Heart left ventricle (tissue), 16 donors: ENCODE measurements at regions of chr12 and their contacts with region 1.

Region 1: DNA sequence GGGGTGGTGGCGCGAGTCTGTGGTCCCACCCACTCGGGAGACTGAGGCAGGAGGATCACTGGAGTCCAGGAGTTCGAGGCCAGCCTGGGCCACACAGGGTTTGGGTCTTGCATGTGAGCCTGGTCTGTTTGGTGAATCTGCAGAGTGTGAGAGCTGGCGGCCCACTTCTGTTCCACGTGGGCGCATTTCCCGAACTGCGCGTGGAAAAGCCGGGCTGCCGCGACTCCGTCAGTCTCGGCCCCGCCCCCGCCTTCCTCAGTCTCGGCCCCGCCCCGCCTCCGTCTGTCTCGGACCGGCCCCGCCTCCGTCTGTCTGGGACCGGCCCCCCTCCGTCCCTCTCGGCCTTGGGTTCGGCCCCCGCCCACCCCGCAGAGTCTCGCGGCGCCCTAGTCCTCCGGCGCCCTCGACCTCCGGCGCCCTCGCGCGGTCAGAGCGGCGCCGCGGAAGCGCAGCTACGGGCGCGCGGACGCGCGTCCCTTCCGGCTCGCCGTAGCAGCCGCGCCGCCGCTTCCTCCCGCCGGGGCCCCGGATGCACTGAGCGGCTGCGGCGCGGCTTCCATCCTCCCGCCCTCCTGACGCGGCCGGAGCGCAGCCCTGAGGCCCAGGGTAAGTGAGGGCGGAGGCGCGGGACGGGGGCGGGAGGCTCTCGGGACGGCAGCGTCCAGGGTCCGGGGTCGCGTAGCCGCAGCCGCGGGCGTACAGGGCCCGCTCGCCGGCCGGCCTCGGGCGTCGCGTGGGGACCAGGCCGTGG is at the start of gene EP400:
- DNase-seq: peak; percentile 96 to 98 (median 97)
- ATAC-seq: peak; percentile 98 to 99 (median 98)
- H3K4me3 ChIP-seq: peak within 1 kb of the TSS; percentile 62 to 99 (median 92)
- H3K27ac ChIP-seq: peak within 1 kb of the TSS; percentile 46 to 87 (median 81)
- H3K4me1 ChIP-seq: peaks cover 0 to 47% (median 15%) of the 10 kb centered on the region in 12 donors
- H3K27me3 ChIP-seq: no peaks in the 10 kb centered on the region
- CTCF ChIP-seq: peak; percentile 14 to 84 (median 61)
- POLR2A ChIP-seq: peak in 1 of 2 donors; percentile 57
- total RNA-seq, gene EP400: 10.3 to 27.8 (median 18.3) TPM

Region 2: DNA sequence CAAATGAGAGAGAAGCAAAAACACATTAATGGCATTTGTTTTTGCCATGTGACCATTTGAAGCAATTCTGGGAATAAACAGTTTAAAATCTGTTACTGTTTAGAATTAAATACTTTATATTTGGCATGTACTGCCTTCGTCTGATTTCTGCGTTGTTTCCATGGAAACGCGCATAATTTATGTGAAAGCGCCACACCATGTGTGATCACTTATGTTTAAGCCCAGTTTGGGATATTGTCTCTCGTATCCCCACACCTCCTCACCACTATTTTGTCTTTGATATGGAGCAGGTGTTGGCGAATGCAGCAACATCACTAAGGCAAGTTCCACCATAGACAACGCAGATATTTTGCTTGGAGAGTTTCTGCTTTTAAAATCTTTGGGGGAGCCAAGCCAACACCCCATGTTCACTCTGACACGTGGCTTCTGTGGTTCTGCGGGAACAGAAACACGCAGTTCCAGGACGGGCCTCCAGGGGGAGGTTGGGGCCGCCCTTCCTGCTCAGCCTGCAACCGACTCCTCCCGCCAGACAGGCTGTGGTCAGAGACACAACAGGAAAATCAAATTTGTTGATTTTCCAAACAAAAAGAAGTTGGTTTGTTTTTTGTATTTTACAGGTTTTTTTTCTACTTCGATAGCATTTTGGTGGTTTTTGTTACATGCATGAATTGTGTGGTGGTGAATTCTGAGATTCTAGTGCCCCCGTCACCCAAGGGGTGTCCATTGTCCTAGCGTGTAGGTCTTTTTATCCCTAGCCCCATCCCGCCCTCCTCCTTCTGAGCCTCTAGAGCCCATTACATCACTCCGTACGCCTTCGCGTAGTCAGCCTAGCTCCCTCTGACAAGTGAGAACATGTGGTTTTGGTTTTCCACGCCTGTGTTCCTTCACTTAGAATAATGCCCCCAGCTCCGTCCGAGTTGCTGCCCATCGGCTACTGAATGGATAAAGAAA is 340.6 kb before region 1 on chr12:
- intact Hi-C with region 1: loop called in 1 of 10 experiments (anchors 5 kb)
- DNase-seq: peak; percentile 67 to 84 (median 71)
- ATAC-seq: peak; percentile 71 to 95 (median 84)
- H3K4me3 ChIP-seq: peak overlapping the region in 3 of 12 donors; percentile 2 to 32 (median 17)
- H3K27ac ChIP-seq: no peak overlapping the region
- H3K4me1 ChIP-seq: peaks cover 0 to 40% (median 0%) of the 10 kb centered on the region in 12 donors
- H3K27me3 ChIP-seq: peaks cover 0 to 6% (median 0%) of the 10 kb centered on the region in 9 donors
- CTCF ChIP-seq: peak; percentile 69 to 94 (median 83)
- POLR2A ChIP-seq: no peak

Region 3: GRCh38 chr12:131830335-131830913 is 119.2 kb before region 1 on chr12:
- intact Hi-C with region 1: loop called in 5 of 10 experiments (anchors 5 to 10 kb)
- DNase-seq: peak; percentile 80 to 92 (median 81)
- ATAC-seq: peak; percentile 59 to 91 (median 88)
- H3K4me3 ChIP-seq: peak overlapping the region; percentile 24 to 67 (median 55)
- H3K27ac ChIP-seq: peak overlapping the region in 11 of 12 donors; percentile 15 to 80 (median 50)
- H3K4me1 ChIP-seq: peaks cover 0 to 46% (median 19%) of the 10 kb centered on the region in 12 donors
- H3K27me3 ChIP-seq: peaks cover 6 to 83% (median 46%) of the 10 kb centered on the region in 9 donors
- CTCF ChIP-seq: peak; percentile 38 to 74 (median 62)
- POLR2A ChIP-seq: peak in 1 of 2 donors; percentile 22

Region 4: DNA sequence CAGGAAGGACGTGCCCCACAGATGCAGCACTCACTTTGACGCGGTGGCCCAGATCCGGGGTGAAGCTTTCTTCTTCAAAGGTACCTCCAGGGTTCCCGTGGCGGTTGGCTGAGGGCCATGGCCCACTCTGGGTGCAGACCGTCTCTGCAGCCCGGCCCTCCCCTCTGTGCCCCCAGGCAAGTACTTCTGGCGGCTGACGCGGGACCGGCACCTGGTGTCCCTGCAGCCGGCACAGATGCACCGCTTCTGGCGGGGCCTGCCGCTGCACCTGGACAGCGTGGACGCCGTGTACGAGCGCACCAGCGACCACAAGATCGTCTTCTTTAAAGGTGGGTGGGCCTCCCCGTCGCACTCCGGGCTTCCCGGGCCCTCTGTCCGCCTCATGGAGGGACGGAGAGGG is 104.5 kb before region 1 on chr12:
- intact Hi-C with region 1: loop called in 4 of 10 experiments (anchors 5 to 10 kb)
- DNase-seq: peak in 1 of 5 donors; percentile 16
- ATAC-seq: no peak
- H3K4me3 ChIP-seq: no peak overlapping the region
- H3K27ac ChIP-seq: no peak overlapping the region
- H3K4me1 ChIP-seq: no peaks in the 10 kb centered on the region
- H3K27me3 ChIP-seq: no peaks in the 10 kb centered on the region
- CTCF ChIP-seq: no peak
- POLR2A ChIP-seq: no peak

Region 5: DNA sequence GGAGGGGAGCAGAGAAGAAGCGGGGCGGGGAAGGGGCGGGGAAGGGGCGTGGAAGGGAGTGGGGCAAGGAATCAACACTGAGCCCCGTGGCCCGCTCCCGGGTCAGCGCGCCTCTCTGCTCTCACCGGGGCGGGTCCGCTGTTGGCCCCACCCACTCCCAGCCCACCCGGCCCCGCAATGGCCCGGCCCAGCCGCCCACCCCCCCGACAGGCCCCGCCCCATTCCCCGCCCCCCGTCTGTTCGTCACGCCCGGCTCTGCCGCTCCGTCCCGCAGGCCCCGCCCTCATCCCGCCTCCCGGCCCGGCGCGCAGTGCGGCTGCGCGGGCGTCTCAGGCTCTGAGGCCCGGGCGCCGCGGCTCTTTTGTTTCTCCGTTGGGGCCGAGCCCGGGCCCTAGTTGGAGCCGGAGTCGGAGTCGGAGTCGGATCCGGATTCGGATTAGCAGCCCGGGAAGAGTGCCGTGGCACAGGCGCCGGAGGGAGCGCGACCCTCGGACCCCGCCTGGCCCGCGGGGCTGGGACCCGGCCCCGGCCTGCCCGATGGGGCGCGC is 55.2 kb before region 1 on chr12 and contains the start of gene ULK1:
- intact Hi-C with region 1: loop called in 1 of 10 experiments (anchors 2 kb)
- DNase-seq: peak; percentile 90 to 96 (median 93)
- ATAC-seq: peak; percentile 72 to 81 (median 74)
- H3K4me3 ChIP-seq: peak within 1 kb of the TSS; percentile 36 to 84 (median 64)
- H3K27ac ChIP-seq: peak within 1 kb of the TSS; percentile 96 to 100 (median 98)
- H3K4me1 ChIP-seq: peaks cover 0 to 39% (median 22%) of the 10 kb centered on the region in 12 donors
- H3K27me3 ChIP-seq: no peaks in the 10 kb centered on the region
- CTCF ChIP-seq: no peak
- POLR2A ChIP-seq: peak; percentile 92 to 95
- total RNA-seq, gene ULK1: 21.9 to 56.0 (median 42.4) TPM